HCT116 (cell line): ENCODE measurements at regions of chr16 and their contacts with region 1.

Region 1: GRCh38 chr16:12067714-12068401 is 91.3 kb downstream of the SNX29 start:
- DNase-seq: peak; percentile 65
- ATAC-seq: peak; percentile 89
- H3K4me3 ChIP-seq: no peak overlapping the region
- H3K27ac ChIP-seq: no peak overlapping the region
- H3K4me1 ChIP-seq: peaks cover 2 to 3% of the 10 kb centered on the region in 2 experiments; a peak in 3 of 4 replicates
- H3K27me3 ChIP-seq: no peaks in the 10 kb centered on the region
- CTCF ChIP-seq: peak; percentile 90 to 92 (median 91)
- POLR2A ChIP-seq: no peak
- RAD21 ChIP-seq: peak; percentile 95

Region 2: GRCh38 chr16:11396241-11397048 is 671.4 kb before region 1 on chr16:
- CTCF ChIA-PET with region 1: interaction called, 10 read pairs
- POLR2A ChIA-PET with region 1: no interaction called
- RAD21 ChIA-PET with region 1: interaction called in 1 of 2 experiments, 3 read pairs
- intact Hi-C with region 1: loop called (anchors 5 kb)
- DNase-seq: no peak
- ATAC-seq: peak; percentile 94
- H3K4me3 ChIP-seq: no peak overlapping the region
- H3K27ac ChIP-seq: no peak overlapping the region
- H3K4me1 ChIP-seq: 0 out of 4 replicates have a peak, but pooled peaks cover 0 to 6% of the 10 kb centered on the region in 2 experiments
- H3K27me3 ChIP-seq: no peaks in the 10 kb centered on the region
- CTCF ChIP-seq: peak; percentile 93 to 98 (median 98)
- POLR2A ChIP-seq: no peak
- RAD21 ChIP-seq: peak; percentile 99

Region 3: GRCh38 chr16:11871193-11871592 is 196.7 kb before region 1 on chr16:
- CTCF ChIA-PET with region 1: interaction called, 8 read pairs
- POLR2A ChIA-PET with region 1: no interaction called
- RAD21 ChIA-PET with region 1: no interaction called
- intact Hi-C with region 1: loop called (anchors 10 kb)
- DNase-seq: no peak
- ATAC-seq: 0 out of 2 replicates have a peak, but pooled peaks have one; percentile 19
- H3K4me3 ChIP-seq: no peak overlapping the region
- H3K27ac ChIP-seq: no peak overlapping the region; the same call in 1 of the 2 replicates
- H3K4me1 ChIP-seq: peaks cover 16 to 31% of the 10 kb centered on the region in 2 experiments
- H3K27me3 ChIP-seq: no peaks in the 10 kb centered on the region
- CTCF ChIP-seq: peak in 2 of 3 experiments; percentile 6 to 27; a peak in 1 of 6 replicates
- POLR2A ChIP-seq: no peak
- RAD21 ChIP-seq: peak; percentile 30

Region 4: GRCh38 chr16:11949527-11949926 is 118.3 kb before region 1 on chr16:
- CTCF ChIA-PET with region 1: interaction called, 34 read pairs
- POLR2A ChIA-PET with region 1: no interaction called
- RAD21 ChIA-PET with region 1: interaction called, 3 to 11 read pairs
- intact Hi-C with region 1: loop called (anchors 1 kb)
- DNase-seq: peak; percentile 28
- ATAC-seq: peak; percentile 99
- H3K4me3 ChIP-seq: no peak overlapping the region
- H3K27ac ChIP-seq: no peak overlapping the region
- H3K4me1 ChIP-seq: no peaks in the 10 kb centered on the region
- H3K27me3 ChIP-seq: no peaks in the 10 kb centered on the region
- CTCF ChIP-seq: peak; percentile 47 to 70 (median 51); a peak in 5 of 6 replicates
- POLR2A ChIP-seq: no peak
- RAD21 ChIP-seq: peak; percentile 83

Region 5: GRCh38 chr16:11972128-11972527 is 95.7 kb before region 1 on chr16:
- CTCF ChIA-PET with region 1: interaction called, 10 read pairs
- POLR2A ChIA-PET with region 1: interaction called, 4 read pairs
- RAD21 ChIA-PET with region 1: no interaction called
- intact Hi-C with region 1: loop called (anchors 5 kb)
- DNase-seq: no peak
- ATAC-seq: no peak
- H3K4me3 ChIP-seq: no peak overlapping the region
- H3K27ac ChIP-seq: no peak overlapping the region
- H3K4me1 ChIP-seq: peaks cover 0 to 9% of the 10 kb centered on the region in 2 experiments; a peak in 3 of 4 replicates
- H3K27me3 ChIP-seq: no peaks in the 10 kb centered on the region
- CTCF ChIP-seq: peak in 2 of 3 experiments; percentile 30 to 42; a peak in 1 of 6 replicates
- POLR2A ChIP-seq: no peak
- RAD21 ChIP-seq: peak; percentile 18; the same call in 1 of the 2 replicates

Region 6: GRCh38 chr16:11977376-11978041 is 90.3 kb before region 1 on chr16:
- CTCF ChIA-PET with region 1: interaction called, 10 read pairs
- POLR2A ChIA-PET with region 1: interaction called, 4 read pairs
- RAD21 ChIA-PET with region 1: interaction called in 1 of 2 experiments, 3 read pairs
- intact Hi-C with region 1: loop called (anchors 5 kb)
- DNase-seq: peak; percentile 15
- ATAC-seq: peak; percentile 25; the same call in 1 of the 2 replicates
- H3K4me3 ChIP-seq: peak overlapping the region; percentile 94 to 97
- H3K27ac ChIP-seq: no peak overlapping the region
- H3K4me1 ChIP-seq: peaks cover 2 to 19% of the 10 kb centered on the region in 2 experiments; a peak in 3 of 4 replicates
- H3K27me3 ChIP-seq: no peaks in the 10 kb centered on the region
- CTCF ChIP-seq: no peak
- POLR2A ChIP-seq: no peak
- RAD21 ChIP-seq: no peak

Region 7: GRCh38 chr16:12120217-12120981 is 52.5 kb after region 1 on chr16:
- CTCF ChIA-PET with region 1: no interaction called
- POLR2A ChIA-PET with region 1: no interaction called
- RAD21 ChIA-PET with region 1: no interaction called
- intact Hi-C with region 1: no loop called
- DNase-seq: no peak
- ATAC-seq: no peak
- H3K4me3 ChIP-seq: no peak overlapping the region
- H3K27ac ChIP-seq: no peak overlapping the region
- H3K4me1 ChIP-seq: peaks cover 0 to 4% of the 10 kb centered on the region in 2 experiments; a peak in 2 of 4 replicates
- H3K27me3 ChIP-seq: no peaks in the 10 kb centered on the region
- CTCF ChIP-seq: no peak
- POLR2A ChIP-seq: no peak
- RAD21 ChIP-seq: no peak